ENCODE measurements at regions of chr11 and their contacts with region 1.

Region 1: DNA sequence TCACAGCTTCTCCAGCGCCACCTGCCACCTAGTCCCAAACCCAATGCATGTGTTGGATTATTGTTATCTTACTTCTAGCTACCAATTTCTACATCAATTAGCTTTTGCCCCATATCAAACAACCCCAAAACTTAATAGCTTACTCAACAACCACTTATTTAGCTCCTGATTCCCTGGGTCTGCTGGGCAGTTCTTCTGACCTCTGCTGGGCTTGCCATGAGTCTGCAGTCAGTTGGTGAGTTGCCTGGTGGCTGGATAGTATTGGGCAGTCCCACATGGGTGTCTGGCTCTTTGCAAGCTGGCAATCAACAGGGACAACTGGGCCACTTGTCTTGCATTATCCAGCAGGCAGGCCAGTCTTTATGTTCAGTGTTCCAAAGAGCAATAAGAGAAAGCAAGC is 13.6 kb upstream of the MS4A15 start:
- DNase-seq: no peak

Region 2: DNA sequence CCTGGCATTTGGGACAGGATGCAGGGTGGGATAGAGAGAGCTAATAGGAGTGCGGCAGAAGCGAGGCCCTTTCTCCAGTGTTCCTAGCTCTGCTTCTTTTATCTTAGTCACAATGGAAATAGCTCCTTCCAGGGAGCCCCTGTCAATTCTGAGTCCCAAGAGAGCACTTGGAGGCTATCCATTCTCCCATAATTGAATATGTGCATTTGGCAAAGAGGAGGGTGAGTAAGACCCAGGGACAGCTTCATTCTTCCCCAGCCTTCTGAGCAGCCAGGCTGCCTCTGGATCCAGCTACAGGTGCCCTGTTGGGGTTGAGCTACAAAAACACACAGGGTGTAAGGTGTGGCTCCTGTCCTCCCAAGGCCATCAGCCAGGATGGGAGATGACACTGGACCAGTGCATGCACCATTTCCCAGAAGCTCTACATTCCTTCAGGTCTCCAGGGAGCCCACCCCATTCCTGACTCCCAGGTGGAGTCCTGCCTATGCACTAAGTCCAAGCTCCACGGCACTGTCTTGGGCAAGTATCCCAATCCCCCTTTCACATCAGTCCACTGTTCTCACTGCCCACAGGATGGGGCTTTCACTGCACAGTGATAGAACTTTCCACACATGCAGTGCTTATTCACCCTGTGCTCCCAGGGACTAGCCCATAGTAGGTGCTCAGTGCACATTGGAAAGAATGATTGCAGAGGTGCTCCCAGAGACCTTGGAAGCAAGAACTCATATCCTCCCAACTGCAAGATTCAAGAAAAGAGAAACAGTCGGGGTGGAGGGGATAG is 48.3 kb after region 1 on chr11:
- in situ Hi-C with region 1: loop called (anchors 10 kb)
- DNase-seq: no peak

Measured in KBM-7 (cell line).